ENCODE measurements at regions of chr22 and their contacts with region 1.

Region 1: DNA sequence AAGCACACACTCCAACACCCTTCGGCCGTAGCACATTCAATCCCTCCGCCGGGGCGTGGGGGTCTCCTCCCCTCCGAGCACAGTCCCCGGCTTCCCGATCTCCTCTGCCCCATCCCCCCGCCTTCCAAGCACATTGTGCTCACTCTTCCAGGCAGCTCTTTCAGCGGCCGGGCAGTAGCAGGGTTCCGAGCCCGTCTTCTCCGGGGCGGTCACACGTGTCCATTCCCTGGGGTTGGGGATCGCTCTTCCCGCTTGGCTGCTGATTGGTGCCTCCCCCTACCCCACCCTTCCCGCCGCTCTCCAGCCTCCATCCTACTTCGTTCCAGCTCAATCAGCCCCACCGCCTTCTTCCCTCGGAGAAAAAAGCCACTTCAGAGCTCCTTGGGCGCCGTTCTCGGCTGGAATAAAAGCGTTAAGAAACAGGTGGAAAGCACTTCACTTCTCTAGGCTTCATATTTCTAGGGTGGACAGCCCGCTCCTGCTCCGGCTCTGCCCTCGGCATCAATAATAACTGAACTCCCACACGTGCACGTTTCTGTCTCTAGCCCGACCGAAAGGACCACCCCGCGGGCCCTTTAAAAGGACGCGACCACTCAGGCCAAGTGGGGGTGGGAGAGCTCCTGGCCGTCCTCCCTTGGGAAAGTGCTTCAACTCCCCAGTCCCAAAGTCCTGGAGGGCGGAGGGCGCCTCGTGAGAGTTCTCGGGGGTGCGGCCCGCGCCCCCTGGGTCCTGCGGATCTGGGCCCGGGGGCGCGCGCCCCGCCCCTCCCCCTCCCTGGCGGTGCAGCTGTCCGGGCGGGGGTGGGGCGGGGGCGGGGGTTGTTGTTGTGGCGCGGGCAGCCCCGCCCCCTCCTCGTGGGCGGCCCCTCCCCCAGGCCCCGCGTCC is 464 bp upstream of the CECR2 start:
- DNase-seq: no peak
- ATAC-seq: peak; percentile 65
- H3K4me3 ChIP-seq: peak overlapping the region in 2 of 3 experiments; percentile 16 to 33; a peak in 2 of 6 replicates
- H3K27ac ChIP-seq: no peak overlapping the region
- H3K4me1 ChIP-seq: peaks cover 9% of the 10 kb centered on the region; the same call in 1 of the 2 replicates
- H3K27me3 ChIP-seq: peaks cover 9 to 47% of the 10 kb centered on the region in 2 experiments; a peak in 4 of 5 replicates
- CTCF ChIP-seq: no peak
- EP300 ChIP-seq: no peak
- POLR2A ChIP-seq: no peak
- RAD21 ChIP-seq: no peak

Region 2: DNA sequence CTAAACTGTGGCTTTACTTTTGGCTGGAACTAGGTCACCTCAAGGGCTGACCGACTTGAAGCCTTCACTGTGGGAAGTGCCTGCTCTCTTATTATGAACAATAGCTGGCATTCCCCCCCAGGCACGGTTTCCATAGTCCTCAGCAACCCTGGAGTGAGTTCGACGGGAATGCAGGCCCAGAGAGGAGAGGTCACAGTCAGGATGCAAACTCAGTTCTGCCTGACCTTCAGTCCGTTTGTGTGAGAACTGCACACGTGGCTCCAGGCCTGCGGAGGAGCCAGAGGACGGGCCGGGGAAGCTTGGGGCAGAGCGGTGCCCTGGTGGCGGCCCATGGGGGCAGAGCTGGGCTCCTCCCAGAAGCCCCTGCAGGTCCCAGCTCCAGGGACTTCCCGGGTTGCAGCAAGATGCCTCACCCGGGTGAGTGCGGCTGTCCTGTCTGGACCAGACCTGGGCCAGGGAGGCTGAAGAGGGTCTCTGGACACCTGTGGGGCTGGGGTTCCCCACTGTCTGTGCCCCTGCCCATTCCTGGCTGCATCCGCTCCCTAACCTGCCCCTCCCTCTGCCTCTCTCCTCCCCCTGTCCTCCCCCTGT is 211.7 kb after region 1 on chr22:
- CTCF ChIA-PET with region 1: no interaction called
- POLR2A ChIA-PET with region 1: no interaction called
- in situ Hi-C with region 1: no loop called
- intact Hi-C with region 1: loop called (anchors 5 kb)
- DNase-seq: peak; percentile 41
- ATAC-seq: peak; percentile 93
- H3K4me3 ChIP-seq: peak overlapping the region; percentile 5 to 51 (median 8); a peak in 3 of 6 replicates
- H3K27ac ChIP-seq: no peak overlapping the region
- H3K4me1 ChIP-seq: peaks cover 31% of the 10 kb centered on the region
- H3K27me3 ChIP-seq: no peaks in the 10 kb centered on the region
- CTCF ChIP-seq: 0 out of 2 replicates have a peak, but pooled peaks have one; percentile 25
- EP300 ChIP-seq: no peak
- POLR2A ChIP-seq: peak in 1 of 2 experiments; percentile 32; a peak in 1 of 4 replicates
- RAD21 ChIP-seq: peak; percentile 55

Region 3: GRCh38 chr22:17612057-17612456 is 243.3 kb after region 1 on chr22:
- CTCF ChIA-PET with region 1: no interaction called
- POLR2A ChIA-PET with region 1: no interaction called
- in situ Hi-C with region 1: no loop called
- intact Hi-C with region 1: no loop called
- DNase-seq: no peak
- ATAC-seq: no peak
- H3K4me3 ChIP-seq: no peak overlapping the region
- H3K27ac ChIP-seq: no peak overlapping the region
- H3K4me1 ChIP-seq: no peaks in the 10 kb centered on the region
- H3K27me3 ChIP-seq: no peaks in the 10 kb centered on the region
- CTCF ChIP-seq: no peak
- EP300 ChIP-seq: no peak
- POLR2A ChIP-seq: no peak
- RAD21 ChIP-seq: no peak